ENCODE measurements at regions of chr6 and their contacts with region 1.

Region 1: GRCh38 chr6:34610819-34611477 is 54.8 kb upstream of the SPDEF start:
- DNase-seq: peak; percentile 51
- ATAC-seq: peak; percentile 64; the same call in 1 of the 2 replicates
- H3K4me3 ChIP-seq: no peak overlapping the region
- H3K27ac ChIP-seq: peak overlapping the region; percentile 30
- H3K4me1 ChIP-seq: peaks cover 22% of the 10 kb centered on the region
- H3K27me3 ChIP-seq: no peaks in the 10 kb centered on the region
- CTCF ChIP-seq: no peak

Region 2: DNA sequence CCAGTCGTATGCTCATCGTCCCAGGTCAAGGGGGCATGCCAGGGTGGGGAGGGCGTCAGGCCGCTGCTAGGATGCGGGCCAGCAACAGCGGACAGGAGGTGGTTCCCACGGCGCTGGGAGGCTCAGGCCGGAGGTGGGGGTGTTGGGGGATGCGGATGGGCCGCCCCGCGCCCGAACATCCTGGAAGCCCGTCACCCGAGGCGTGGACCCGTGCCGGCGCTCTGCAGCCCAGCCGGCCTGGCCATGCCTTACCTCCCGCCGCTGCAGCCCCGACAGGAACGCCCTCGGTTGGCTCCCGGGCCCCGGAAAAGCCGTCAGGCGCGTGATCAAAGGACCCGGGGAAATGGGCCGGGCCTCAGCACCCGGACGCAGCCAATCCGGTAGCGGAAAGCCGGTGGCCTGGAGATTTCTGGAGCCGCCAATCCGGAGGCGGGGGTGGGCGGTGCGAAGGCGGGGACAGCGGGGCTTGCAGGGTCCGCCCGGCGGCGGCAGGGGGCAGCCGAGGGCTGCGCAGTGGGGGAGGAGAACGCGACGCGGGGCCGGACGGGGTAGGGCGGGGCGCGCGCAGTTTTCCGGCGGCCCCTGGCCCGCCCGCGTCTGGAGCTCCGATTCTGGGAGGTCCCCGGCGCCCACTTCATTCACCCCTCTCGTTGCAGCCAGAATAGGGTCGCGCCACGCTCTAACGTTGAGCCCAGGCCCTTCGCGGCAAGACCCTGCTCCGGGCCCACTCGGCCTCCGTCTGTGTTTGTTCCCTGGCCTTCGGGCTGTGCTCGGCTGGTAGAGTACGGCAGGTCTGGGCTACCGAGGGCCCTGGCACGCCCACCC is 362.0 kb before region 1 on chr6 and contains the start of gene SMIM29:
- CTCF ChIA-PET with region 1: interaction called, 4 read pairs
- POLR2A ChIA-PET with region 1: no interaction called
- in situ Hi-C with region 1: no loop called
- intact Hi-C with region 1: loop called (anchors 5 kb)
- DNase-seq: no peak
- ATAC-seq: peak; percentile 73
- H3K4me3 ChIP-seq: peak within 1 kb of the TSS; percentile 51 to 91
- H3K27ac ChIP-seq: peak within 1 kb of the TSS; percentile 89
- H3K4me1 ChIP-seq: peaks cover 47% of the 10 kb centered on the region
- H3K27me3 ChIP-seq: no peaks in the 10 kb centered on the region
- CTCF ChIP-seq: peak; percentile 98
- total RNA-seq, gene SMIM29: 35.6 TPM

Region 3: DNA sequence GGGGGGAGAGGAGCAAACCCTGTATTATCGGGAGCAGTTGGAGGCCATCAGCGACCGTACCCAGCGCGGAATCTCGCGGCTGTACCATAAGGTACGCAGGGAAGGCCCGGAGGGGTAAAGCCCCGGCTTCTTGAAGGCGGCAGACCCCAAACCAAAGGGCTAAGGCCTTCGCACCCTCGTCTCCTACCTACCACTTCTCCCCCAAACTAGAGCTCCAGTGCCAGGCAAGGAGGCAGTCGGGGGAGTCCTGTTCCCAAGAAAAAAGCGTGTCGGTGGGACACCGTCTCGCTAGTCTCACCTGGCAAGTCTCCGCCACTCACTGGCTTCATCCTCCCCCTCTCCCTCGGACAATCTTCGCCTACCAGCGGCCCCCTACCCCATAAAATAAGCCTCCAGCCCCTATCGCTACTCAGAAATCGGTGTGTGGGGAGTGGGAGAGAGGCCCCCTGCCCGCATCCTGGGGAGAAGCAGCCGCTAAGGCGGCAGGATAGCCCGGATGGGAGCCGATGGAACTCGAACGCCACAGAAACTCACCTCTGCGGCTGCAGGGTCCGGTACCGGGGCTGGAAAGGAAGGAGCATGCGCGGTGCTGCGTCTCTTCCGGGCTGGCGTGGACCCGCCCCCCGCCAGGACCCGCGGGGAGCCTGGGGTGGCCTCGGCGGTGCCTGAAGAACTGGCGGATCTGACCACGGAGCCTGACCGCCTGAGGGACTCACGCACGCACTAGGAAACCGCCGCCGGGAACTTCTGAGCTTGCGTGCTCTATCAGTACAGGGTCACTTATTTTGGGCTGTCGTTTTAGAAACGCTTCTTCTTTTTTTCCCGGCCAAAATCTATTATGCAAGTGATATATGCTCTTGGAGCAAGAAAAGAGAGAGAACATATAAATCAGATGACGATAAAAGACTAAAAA is 185.2 kb before region 1 on chr6 and contains the start of gene RPS10:
- CTCF ChIA-PET with region 1: interaction called, 4 read pairs
- POLR2A ChIA-PET with region 1: interaction called, 15 read pairs
- in situ Hi-C with region 1: no loop called
- intact Hi-C with region 1: no loop called
- DNase-seq: peak; percentile 60
- ATAC-seq: peak; percentile 97
- H3K4me3 ChIP-seq: peak within 1 kb of the TSS; percentile 95 to 100
- H3K27ac ChIP-seq: peak within 1 kb of the TSS; percentile 97
- H3K4me1 ChIP-seq: peaks cover 10% of the 10 kb centered on the region
- H3K27me3 ChIP-seq: no peaks in the 10 kb centered on the region
- CTCF ChIP-seq: no peak
- total RNA-seq, gene RPS10: 1,363 TPM

Region 4: GRCh38 chr6:34459899-34460593 is 150.9 kb before region 1 on chr6:
- CTCF ChIA-PET with region 1: interaction called, 19 read pairs
- POLR2A ChIA-PET with region 1: no interaction called
- in situ Hi-C with region 1: no loop called
- intact Hi-C with region 1: loop called (anchors 5 kb)
- DNase-seq: peak; percentile 50
- ATAC-seq: peak; percentile 77
- H3K4me3 ChIP-seq: no peak overlapping the region
- H3K27ac ChIP-seq: no peak overlapping the region
- H3K4me1 ChIP-seq: no peaks in the 10 kb centered on the region
- H3K27me3 ChIP-seq: no peaks in the 10 kb centered on the region
- CTCF ChIP-seq: peak; percentile 86

Region 5: GRCh38 chr6:34526992-34527728 is 83.8 kb before region 1 on chr6:
- CTCF ChIA-PET with region 1: interaction called, 8 read pairs
- POLR2A ChIA-PET with region 1: no interaction called
- in situ Hi-C with region 1: no loop called
- intact Hi-C with region 1: loop called (anchors 5 kb)
- DNase-seq: peak; percentile 53
- ATAC-seq: peak; percentile 95
- H3K4me3 ChIP-seq: peak overlapping the region; percentile 27 to 39
- H3K27ac ChIP-seq: peak overlapping the region; percentile 72
- H3K4me1 ChIP-seq: peaks cover 15% of the 10 kb centered on the region
- H3K27me3 ChIP-seq: no peaks in the 10 kb centered on the region
- CTCF ChIP-seq: peak; percentile 85; the same call in 1 of the 2 replicates

Region 6: GRCh38 chr6:35202066-35202546 is 591.2 kb after region 1 on chr6:
- CTCF ChIA-PET with region 1: no interaction called
- POLR2A ChIA-PET with region 1: no interaction called
- in situ Hi-C with region 1: no loop called
- intact Hi-C with region 1: no loop called
- DNase-seq: no peak
- ATAC-seq: 0 out of 2 replicates have a peak, but pooled peaks have one; percentile 43
- H3K4me3 ChIP-seq: no peak overlapping the region
- H3K27ac ChIP-seq: peak overlapping the region; percentile 15; the same call in 1 of the 2 replicates
- H3K4me1 ChIP-seq: peaks cover 14% of the 10 kb centered on the region
- H3K27me3 ChIP-seq: no peaks in the 10 kb centered on the region
- CTCF ChIP-seq: peak; percentile 37